Posterior cingulate gyrus (tissue), 11 donors: ENCODE measurements at regions of chr7 and their contacts with region 1.

Region 1: DNA sequence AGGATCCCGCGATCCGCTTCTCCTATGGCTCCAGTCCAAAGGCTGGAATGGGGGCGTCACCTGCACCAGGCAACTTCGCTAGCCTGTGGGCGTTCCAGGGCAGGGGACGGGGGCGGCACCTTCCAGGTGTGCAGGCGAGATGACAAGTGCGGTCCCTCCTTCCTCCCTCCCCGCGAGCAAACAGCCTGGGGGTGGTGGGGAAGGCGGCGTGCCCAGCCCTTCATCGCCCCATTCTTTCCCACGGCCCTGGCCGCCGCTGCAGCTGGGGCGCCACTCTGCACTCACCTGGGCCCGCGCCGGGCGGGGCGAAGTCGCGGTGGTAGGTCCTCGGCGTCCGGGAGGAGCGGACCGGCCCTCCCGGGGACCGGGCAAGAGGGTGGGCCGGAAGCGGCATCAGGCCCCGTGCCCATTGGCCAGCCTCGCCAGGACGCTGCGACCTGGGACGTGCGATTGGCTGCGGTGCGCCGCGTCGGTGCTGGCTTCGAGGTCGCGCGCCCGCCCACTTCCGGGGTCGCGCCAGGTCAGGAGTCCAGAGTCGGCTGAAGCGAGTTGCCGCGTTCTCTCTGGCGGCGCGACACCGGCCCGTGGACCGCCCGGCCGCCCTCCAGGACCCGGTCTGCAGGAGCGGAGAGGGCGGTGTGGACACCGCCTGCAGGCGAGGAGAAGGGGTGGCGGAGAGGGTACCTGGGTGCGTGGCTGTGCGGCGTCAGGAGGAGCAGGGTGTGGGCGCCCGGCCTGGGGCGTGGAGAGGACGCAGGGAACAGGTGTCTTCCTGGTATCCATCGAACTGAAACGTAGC is at the start of gene TECPR1:
- DNase-seq: peak; percentile 95 to 100 (median 96)

Region 2: GRCh38 chr7:98280791-98281756 is 29.0 kb after region 1 on chr7 and contains the start of gene BRI3:
- intact Hi-C with region 1: loop called (anchors 2 kb)
- DNase-seq: peak; percentile 77 to 97 (median 84)

Region 3: DNA sequence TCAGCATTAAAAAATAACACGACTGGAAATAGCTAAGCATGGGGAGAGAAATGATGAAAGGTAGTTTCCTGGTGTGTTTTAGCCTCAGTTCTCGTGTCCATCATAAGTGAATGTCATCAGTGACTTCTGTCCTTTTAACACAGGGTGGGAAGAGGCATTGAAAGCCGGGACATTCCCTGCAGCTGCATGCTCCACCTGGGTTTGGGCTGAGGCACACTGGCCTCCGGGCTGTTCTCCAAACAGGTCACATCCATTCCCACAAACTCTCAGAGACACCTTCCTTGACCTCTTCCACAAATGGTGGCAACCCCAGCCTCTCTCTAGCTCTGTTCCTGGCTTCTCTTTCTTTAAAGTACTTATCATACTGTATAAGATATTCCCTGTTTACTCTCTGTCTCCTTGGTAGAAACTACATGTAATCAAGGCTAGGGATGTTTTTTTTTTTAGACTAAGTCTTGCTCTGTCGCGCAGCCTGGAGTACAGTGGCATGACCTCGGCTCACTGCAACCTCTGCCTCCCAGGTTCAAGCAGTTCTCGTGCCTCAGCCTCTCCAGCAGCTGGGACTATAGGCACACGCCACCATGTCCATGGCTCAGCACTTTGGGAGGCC is 126.3 kb after region 1 on chr7:
- intact Hi-C with region 1: no loop called
- DNase-seq: no peak